OCI-LY7 (cell line): ENCODE measurements at regions of chrX and their contacts with region 1.

Region 1: DNA sequence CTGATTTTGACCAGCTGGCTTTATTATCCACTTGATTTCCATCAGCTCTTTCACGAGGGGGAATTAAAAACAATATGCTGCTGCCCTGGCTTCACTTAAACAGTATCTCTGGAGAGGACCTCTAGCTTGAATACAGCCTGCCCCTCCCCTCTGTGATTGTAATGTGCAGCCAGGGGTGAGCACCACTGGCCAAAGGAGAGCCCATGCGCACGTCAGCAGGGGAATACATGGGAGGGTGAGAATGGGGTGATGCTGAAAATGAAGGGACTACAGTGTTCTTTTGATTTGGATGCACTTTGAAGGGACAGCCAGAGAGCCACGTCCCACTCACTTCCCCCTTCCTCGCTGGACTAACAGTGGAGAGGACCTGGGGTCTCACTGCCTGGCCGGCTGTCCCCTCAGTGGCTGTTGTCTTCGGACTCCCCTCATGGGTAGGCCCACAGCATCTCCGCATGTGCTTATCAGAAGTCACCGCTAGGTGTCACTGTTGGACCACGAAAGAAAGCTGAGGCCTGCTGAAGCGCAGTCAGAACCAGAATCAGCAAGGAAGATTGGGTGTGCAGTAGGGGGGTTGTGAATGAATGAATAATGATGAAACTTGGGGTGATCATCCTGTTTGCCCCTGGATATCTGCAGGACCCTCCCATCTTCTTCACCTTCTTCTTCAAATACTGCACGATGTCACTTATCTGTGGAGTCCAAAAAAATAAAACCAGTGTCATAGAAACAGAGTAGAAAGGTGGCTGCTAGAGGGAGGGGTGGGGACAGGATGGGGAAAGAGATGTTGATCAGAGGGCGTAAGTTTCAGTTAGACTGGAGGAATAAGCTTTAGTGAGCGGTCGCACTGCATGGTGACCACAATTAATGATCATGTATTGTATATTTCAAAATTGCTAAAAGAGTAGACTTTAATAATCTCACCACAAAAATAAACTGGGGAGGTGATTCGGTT is 32.8 kb downstream of the CLCN4 start:
- DNase-seq: peak; percentile 69
- H3K4me3 ChIP-seq: no peak overlapping the region
- H3K27ac ChIP-seq: no peak overlapping the region
- H3K4me1 ChIP-seq: no peaks in the 10 kb centered on the region
- CTCF ChIP-seq: peak; percentile 79

Region 2: GRCh38 chrX:9995855-9996339 is 193.7 kb before region 1 on chrX:
- CTCF ChIA-PET with region 1: no interaction called
- POLR2A ChIA-PET with region 1: no interaction called
- intact Hi-C with region 1: loop called (anchors 10 kb)
- DNase-seq: peak; percentile 72
- H3K4me3 ChIP-seq: no peak overlapping the region
- H3K27ac ChIP-seq: no peak overlapping the region
- H3K4me1 ChIP-seq: no peaks in the 10 kb centered on the region
- CTCF ChIP-seq: peak; percentile 92

Region 3: DNA sequence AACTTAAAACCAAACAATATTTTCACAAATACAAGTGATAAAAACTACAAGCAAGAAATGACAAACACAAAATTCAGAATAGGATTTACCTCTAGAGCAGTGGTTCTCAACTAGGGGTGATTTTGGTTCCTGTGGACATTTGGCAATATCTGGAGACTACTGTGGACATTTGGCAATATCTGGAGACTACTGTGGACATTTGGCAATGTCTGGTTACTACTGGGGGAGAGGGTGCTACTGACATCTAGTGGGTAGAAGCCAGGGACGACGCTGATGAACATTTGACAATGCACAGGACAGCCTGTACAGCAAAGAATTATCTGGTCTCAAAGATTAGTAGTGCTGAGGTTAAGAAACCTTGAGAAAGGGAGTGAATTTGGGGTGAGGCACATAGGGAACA is 137.0 kb after region 1 on chrX:
- CTCF ChIA-PET with region 1: no interaction called
- POLR2A ChIA-PET with region 1: no interaction called
- intact Hi-C with region 1: loop called (anchors 2 kb)
- DNase-seq: peak; percentile 8
- H3K4me3 ChIP-seq: no peak overlapping the region
- H3K27ac ChIP-seq: no peak overlapping the region
- H3K4me1 ChIP-seq: no peaks in the 10 kb centered on the region
- CTCF ChIP-seq: peak; percentile 55

Region 4: GRCh38 chrX:10433296-10433965 is 243.8 kb after region 1 on chrX:
- CTCF ChIA-PET with region 1: no interaction called
- POLR2A ChIA-PET with region 1: no interaction called
- intact Hi-C with region 1: no loop called
- DNase-seq: no peak
- H3K4me3 ChIP-seq: no peak overlapping the region
- H3K27ac ChIP-seq: no peak overlapping the region
- H3K4me1 ChIP-seq: no peaks in the 10 kb centered on the region
- CTCF ChIP-seq: no peak

Region 5: DNA sequence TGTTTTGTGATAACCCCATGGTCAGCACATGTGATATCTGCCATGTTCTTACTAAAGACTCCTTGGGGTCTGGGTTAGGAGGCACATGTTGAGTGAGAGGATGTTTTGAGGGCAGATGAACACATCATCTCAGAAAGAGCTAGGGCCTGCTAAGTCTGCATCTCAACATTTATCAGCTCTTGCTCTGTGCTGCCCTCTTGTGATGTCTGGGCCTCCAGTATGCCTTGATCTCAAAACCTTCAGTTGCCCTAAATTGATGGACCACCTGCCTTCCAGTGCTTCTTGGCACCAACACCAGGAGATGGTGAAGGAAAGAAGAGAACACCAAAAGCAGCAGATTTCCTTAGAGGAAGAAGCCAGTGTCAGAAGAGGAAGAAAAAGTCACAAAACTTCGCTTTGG is 408.3 kb after region 1 on chrX:
- CTCF ChIA-PET with region 1: interaction called, 5 read pairs
- POLR2A ChIA-PET with region 1: no interaction called
- intact Hi-C with region 1: loop called (anchors 5 kb)
- DNase-seq: peak; percentile 23
- H3K4me3 ChIP-seq: no peak overlapping the region
- H3K27ac ChIP-seq: no peak overlapping the region
- H3K4me1 ChIP-seq: no peaks in the 10 kb centered on the region
- CTCF ChIP-seq: peak; percentile 68

Region 6: DNA sequence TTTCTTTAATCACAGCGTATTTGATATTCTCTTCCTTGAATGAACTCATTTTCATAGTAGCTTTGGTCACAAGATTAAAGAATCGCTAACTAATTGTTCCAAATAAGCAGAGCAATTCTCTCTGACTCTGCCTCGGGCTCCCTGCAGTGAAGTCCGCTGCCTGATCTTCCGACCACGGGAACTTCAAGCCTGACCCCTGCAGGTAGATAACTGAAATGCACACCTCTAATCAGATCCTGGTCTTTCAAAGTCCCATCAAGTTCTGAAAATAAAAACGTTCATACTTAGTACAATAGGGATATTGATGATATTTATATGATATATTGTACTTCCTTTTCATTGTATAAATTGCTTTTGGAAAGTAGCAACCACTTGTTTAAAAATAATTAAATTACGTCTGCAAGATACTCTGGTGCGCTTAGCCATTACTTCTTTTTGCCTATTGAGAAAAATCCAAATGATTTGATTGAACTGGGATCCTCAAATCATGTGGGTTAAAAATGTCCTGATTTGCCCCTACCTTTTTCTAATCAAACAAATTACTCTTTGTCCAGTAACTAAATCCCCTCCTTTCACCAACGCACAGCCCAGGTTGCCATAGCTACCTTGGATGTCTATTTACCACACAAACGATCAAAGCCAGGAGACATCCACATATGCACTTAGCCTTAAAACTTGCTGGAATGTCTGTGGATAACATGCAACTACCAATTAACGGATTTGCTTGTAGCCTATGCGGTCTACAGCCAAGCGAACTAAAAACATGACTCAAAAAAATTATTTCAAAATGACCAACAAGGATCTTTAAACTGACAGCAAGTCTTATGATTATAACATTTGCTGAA is 426.6 kb after region 1 on chrX:
- CTCF ChIA-PET with region 1: no interaction called
- POLR2A ChIA-PET with region 1: no interaction called
- intact Hi-C with region 1: loop called (anchors 1 kb)
- DNase-seq: peak; percentile 28
- H3K4me3 ChIP-seq: no peak overlapping the region
- H3K27ac ChIP-seq: no peak overlapping the region
- H3K4me1 ChIP-seq: no peaks in the 10 kb centered on the region
- CTCF ChIP-seq: peak; percentile 75

Region 7: GRCh38 chrX:10722851-10723250 is 533.3 kb after region 1 on chrX:
- CTCF ChIA-PET with region 1: no interaction called
- POLR2A ChIA-PET with region 1: no interaction called
- intact Hi-C with region 1: loop called (anchors 2 kb)
- DNase-seq: peak; percentile 21
- H3K4me3 ChIP-seq: no peak overlapping the region
- H3K27ac ChIP-seq: no peak overlapping the region
- H3K4me1 ChIP-seq: no peaks in the 10 kb centered on the region
- CTCF ChIP-seq: peak; percentile 80

Region 8: GRCh38 chrX:11137543-11138139 is 948.0 kb after region 1 on chrX:
- CTCF ChIA-PET with region 1: no interaction called
- POLR2A ChIA-PET with region 1: no interaction called
- intact Hi-C with region 1: loop called (anchors 10 kb)
- DNase-seq: peak; percentile 47
- H3K4me3 ChIP-seq: no peak overlapping the region
- H3K27ac ChIP-seq: no peak overlapping the region
- H3K4me1 ChIP-seq: peaks cover 7% of the 10 kb centered on the region
- CTCF ChIP-seq: peak; percentile 83